Thyroid gland (tissue), 4 donors: ENCODE measurements at regions of chr10 and their contacts with region 1.

Region 1: DNA sequence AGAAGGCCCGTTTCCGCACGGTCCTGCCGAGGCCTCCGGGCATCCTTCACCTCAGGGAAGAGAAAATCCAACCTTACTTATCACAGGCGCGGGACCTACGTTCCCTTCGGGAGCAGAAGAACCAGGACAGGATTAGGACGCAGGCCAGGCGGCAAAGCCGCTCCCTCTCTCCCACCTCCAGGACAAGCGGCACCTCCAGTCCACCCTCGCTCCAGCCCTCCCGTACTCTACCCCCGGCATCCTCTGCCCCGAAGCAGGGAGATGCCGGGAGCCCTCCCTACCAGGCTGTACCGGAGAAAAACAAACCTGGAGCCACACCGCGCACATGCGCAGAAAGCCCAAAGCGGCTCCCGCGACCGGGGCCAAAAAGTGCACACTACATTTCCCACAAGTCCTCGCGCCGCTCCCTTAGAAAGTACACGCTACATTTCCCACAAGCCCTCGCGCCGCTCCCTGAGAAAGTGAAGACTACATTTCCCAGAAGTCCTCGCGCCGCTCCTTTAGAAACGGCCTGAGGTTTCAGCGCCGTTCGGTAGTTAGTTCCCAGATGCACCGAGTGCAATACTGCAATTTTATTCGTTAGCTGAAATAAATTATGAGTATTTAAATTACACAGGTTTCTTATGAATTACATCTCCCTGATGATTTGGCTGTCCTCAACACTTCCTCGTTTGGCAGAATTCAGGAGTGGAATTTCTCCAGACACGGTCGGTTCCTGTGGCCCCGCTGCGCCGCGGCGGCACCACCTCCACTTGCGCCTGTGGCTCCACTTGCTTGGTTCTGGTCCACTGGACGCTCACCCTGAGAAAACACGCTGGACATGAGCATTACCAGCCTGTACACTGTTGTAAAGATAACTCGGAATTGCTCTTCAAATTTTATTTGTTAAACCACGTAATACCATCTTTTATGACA is 85.6 kb downstream of the ZNF33B start:
- DNase-seq: peak; percentile 97 to 98
- H3K4me3 ChIP-seq: peak overlapping the region; percentile 24 to 54 (median 41)
- H3K27ac ChIP-seq: peak overlapping the region; percentile 30 to 59 (median 53)
- H3K4me1 ChIP-seq: peaks cover 10 to 11% of the 10 kb centered on the region in 2 donors
- H3K27me3 ChIP-seq: no peaks in the 10 kb centered on the region
- CTCF ChIP-seq: no peak
- POLR2A ChIP-seq: peak in 1 of 2 donors; percentile 80

Region 2: DNA sequence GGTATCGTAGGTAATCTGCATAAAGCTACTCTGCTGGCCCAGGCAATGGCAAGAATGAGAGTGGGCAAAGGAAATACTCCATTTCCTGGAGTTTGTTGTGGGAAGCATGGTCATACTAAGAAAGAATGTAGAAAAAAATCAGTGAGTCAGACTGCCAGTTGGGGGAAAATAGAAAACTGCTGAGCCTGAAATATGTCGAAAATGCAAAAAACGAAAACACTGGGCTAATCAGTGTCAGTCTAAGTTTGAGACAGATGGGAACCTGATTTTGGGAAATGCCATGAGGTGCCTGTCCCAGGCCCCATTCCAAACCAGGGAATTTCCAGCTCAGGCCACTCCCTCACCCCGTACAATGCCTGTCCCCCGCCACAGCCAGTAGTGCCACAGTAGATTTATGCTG is 64.3 kb before region 1 on chr10:
- intact Hi-C with region 1: no loop called
- DNase-seq: no peak
- H3K4me3 ChIP-seq: no peak overlapping the region
- H3K27ac ChIP-seq: no peak overlapping the region
- H3K4me1 ChIP-seq: no peaks in the 10 kb centered on the region
- H3K27me3 ChIP-seq: no peaks in the 10 kb centered on the region
- CTCF ChIP-seq: no peak
- POLR2A ChIP-seq: no peak

Region 3: GRCh38 chr10:42646663-42647640 is 94.2 kb after region 1 on chr10:
- intact Hi-C with region 1: loop called (anchors 10 kb)
- DNase-seq: peak; percentile 63 to 64
- H3K4me3 ChIP-seq: no peak overlapping the region
- H3K27ac ChIP-seq: peak overlapping the region; percentile 68 to 84 (median 76)
- H3K4me1 ChIP-seq: peaks cover 14 to 24% of the 10 kb centered on the region in 2 donors
- H3K27me3 ChIP-seq: no peaks in the 10 kb centered on the region
- CTCF ChIP-seq: no peak
- POLR2A ChIP-seq: no peak